ENCODE measurements at regions of chr1 and their contacts with region 1.

Region 1: DNA sequence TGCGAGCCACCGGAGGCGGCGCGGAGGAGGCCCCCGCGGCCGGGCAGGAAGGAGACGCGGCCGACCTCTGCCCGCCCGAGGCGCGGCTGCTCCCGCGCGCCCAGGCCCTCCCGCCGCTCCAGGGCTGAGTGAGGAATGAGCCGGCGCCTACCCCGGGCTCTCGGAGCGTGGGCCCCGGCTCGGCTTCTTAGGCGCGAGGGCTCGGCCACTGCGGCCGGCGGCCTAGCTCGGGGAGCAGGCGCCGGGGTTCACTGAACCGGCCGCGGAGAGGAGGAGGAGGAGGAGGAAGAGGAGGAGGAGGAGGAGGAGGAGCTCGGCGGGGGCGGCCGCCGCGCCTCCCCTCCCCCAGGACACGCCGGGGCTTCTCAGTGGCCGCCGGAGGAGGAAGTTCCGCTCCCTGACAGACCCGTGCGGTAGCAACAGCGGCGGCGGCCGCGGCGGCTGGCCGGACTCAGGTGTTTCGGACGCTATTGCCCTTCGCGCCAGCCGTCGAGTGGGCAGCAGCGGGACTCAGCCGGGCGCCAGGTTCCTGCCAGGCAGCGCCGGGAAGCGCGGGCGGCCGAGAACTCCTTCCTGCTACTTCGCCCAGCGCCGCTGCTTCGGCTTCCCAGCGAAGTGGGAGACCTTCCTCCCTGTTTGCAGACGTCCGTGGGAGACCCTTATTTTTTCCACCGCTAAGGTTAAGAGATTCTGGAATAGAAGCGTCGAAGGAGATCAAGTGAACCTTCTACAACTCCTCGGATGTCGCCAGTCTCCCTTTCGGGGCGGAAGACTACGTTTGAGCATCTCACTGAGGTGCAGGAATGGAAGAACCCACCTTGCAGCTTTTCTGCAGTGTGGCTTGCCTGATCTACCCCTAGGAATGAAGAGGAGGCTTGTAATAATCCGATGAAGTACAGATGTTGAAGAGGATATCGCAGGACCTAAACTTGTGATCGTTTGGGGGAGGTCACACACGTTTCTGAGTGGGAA is at the start of gene MAN1A2:
- DNase-seq: peak; percentile 31 to 87 (median 71)
- ATAC-seq: peak; percentile 61
- H3K4me3 ChIP-seq: peak within 1 kb of the TSS; percentile 57 to 84
- H3K4me3 Mint-ChIP-seq: peak within 1 kb of the TSS; percentile 95
- H3K27ac ChIP-seq: peak within 1 kb of the TSS; percentile 63 to 91
- H3K27ac Mint-ChIP-seq: peak within 1 kb of the TSS; percentile 97
- H3K4me1 ChIP-seq: peaks cover 52% of the 10 kb centered on the region
- H3K4me1 Mint-ChIP-seq: peaks cover 76% of the 10 kb centered on the region
- H3K27me3 ChIP-seq: no peaks in the 10 kb centered on the region
- H3K27me3 Mint-ChIP-seq: no peaks in the 10 kb centered on the region
- CTCF ChIP-seq: no peak
- total RNA-seq, gene MAN1A2: 46.5 to 49.3 TPM

Region 2: DNA sequence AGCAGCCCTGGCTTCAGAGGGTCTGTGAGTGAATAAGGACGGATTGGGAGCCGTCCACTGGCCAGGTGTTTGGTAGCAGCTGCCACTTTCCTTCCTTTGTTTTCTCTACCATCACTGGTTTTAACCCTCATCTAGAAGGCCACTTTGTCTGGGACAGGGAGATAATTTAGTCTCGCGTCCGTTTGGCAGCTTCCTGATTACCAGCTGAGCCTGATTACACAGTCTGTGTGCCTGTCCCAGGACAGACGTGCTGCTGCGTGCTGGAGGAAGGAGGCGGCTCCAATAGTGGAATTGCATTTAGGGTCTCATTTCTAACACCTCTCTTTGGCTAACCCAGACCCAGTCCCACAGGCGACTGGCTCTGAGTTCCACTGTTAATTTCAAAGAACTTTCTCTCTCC is 1574.2 kb before region 1 on chr1:
- CTCF ChIA-PET with region 1: no interaction called
- POLR2A ChIA-PET with region 1: no interaction called
- intact Hi-C with region 1: no loop called
- DNase-seq: no peak
- ATAC-seq: no peak
- H3K4me3 ChIP-seq: no peak overlapping the region
- H3K4me3 Mint-ChIP-seq: no peak overlapping the region
- H3K27ac ChIP-seq: no peak overlapping the region
- H3K27ac Mint-ChIP-seq: no peak overlapping the region
- H3K4me1 ChIP-seq: no peaks in the 10 kb centered on the region
- H3K4me1 Mint-ChIP-seq: no peaks in the 10 kb centered on the region
- H3K27me3 ChIP-seq: no peaks in the 10 kb centered on the region
- H3K27me3 Mint-ChIP-seq: peaks cover 31% of the 10 kb centered on the region
- CTCF ChIP-seq: no peak

Region 3: GRCh38 chr1:116418091-116418830 is 949.1 kb before region 1 on chr1:
- CTCF ChIA-PET with region 1: no interaction called
- POLR2A ChIA-PET with region 1: no interaction called
- intact Hi-C with region 1: loop called in 1 of 2 experiments (anchors 10 kb)
- DNase-seq: peak; percentile 79 to 93 (median 87)
- ATAC-seq: peak; percentile 98
- H3K4me3 ChIP-seq: peak overlapping the region; percentile 81 to 83
- H3K4me3 Mint-ChIP-seq: peak overlapping the region; percentile 89
- H3K27ac ChIP-seq: peak overlapping the region; percentile 78 to 80
- H3K27ac Mint-ChIP-seq: peak overlapping the region; percentile 96
- H3K4me1 ChIP-seq: peaks cover 29% of the 10 kb centered on the region
- H3K4me1 Mint-ChIP-seq: peaks cover 35% of the 10 kb centered on the region
- H3K27me3 ChIP-seq: no peaks in the 10 kb centered on the region
- H3K27me3 Mint-ChIP-seq: no peaks in the 10 kb centered on the region
- CTCF ChIP-seq: no peak

Region 4: GRCh38 chr1:117301901-117302300 is 65.4 kb before region 1 on chr1:
- CTCF ChIA-PET with region 1: no interaction called
- POLR2A ChIA-PET with region 1: no interaction called
- intact Hi-C with region 1: no loop called
- DNase-seq: no peak
- ATAC-seq: no peak
- H3K4me3 ChIP-seq: no peak overlapping the region
- H3K4me3 Mint-ChIP-seq: no peak overlapping the region
- H3K27ac ChIP-seq: no peak overlapping the region
- H3K27ac Mint-ChIP-seq: no peak overlapping the region
- H3K4me1 ChIP-seq: no peaks in the 10 kb centered on the region
- H3K4me1 Mint-ChIP-seq: no peaks in the 10 kb centered on the region
- H3K27me3 ChIP-seq: no peaks in the 10 kb centered on the region
- H3K27me3 Mint-ChIP-seq: no peaks in the 10 kb centered on the region
- CTCF ChIP-seq: no peak

Region 5: GRCh38 chr1:117339866-117340700 is 27.2 kb before region 1 on chr1:
- CTCF ChIA-PET with region 1: interaction called, 3 read pairs
- POLR2A ChIA-PET with region 1: interaction called, 15 read pairs
- intact Hi-C with region 1: no loop called
- DNase-seq: peak in 3 of 9 experiments; percentile 36 to 66 (median 61)
- ATAC-seq: peak; percentile 90
- H3K4me3 ChIP-seq: no peak overlapping the region
- H3K4me3 Mint-ChIP-seq: no peak overlapping the region
- H3K27ac ChIP-seq: no peak overlapping the region
- H3K27ac Mint-ChIP-seq: no peak overlapping the region
- H3K4me1 ChIP-seq: no peaks in the 10 kb centered on the region
- H3K4me1 Mint-ChIP-seq: peaks cover 22% of the 10 kb centered on the region
- H3K27me3 ChIP-seq: no peaks in the 10 kb centered on the region
- H3K27me3 Mint-ChIP-seq: no peaks in the 10 kb centered on the region
- CTCF ChIP-seq: no peak

Region 6: GRCh38 chr1:117416546-117417125 is 49.3 kb after region 1 on chr1:
- CTCF ChIA-PET with region 1: no interaction called
- POLR2A ChIA-PET with region 1: interaction called, 3 read pairs
- intact Hi-C with region 1: loop called in 1 of 2 experiments (anchors 10 kb)
- DNase-seq: no peak
- ATAC-seq: no peak
- H3K4me3 ChIP-seq: no peak overlapping the region
- H3K4me3 Mint-ChIP-seq: no peak overlapping the region
- H3K27ac ChIP-seq: no peak overlapping the region
- H3K27ac Mint-ChIP-seq: peak overlapping the region; percentile 6
- H3K4me1 ChIP-seq: no peaks in the 10 kb centered on the region
- H3K4me1 Mint-ChIP-seq: peaks cover 37% of the 10 kb centered on the region
- H3K27me3 ChIP-seq: no peaks in the 10 kb centered on the region
- H3K27me3 Mint-ChIP-seq: no peaks in the 10 kb centered on the region
- CTCF ChIP-seq: no peak

Region 7: GRCh38 chr1:117501281-117501680 is 133.9 kb after region 1 on chr1:
- CTCF ChIA-PET with region 1: no interaction called
- POLR2A ChIA-PET with region 1: no interaction called
- intact Hi-C with region 1: no loop called
- DNase-seq: no peak
- ATAC-seq: no peak
- H3K4me3 ChIP-seq: no peak overlapping the region
- H3K4me3 Mint-ChIP-seq: no peak overlapping the region
- H3K27ac ChIP-seq: no peak overlapping the region
- H3K27ac Mint-ChIP-seq: no peak overlapping the region
- H3K4me1 ChIP-seq: no peaks in the 10 kb centered on the region
- H3K4me1 Mint-ChIP-seq: no peaks in the 10 kb centered on the region
- H3K27me3 ChIP-seq: no peaks in the 10 kb centered on the region
- H3K27me3 Mint-ChIP-seq: no peaks in the 10 kb centered on the region
- CTCF ChIP-seq: no peak

Region 8: DNA sequence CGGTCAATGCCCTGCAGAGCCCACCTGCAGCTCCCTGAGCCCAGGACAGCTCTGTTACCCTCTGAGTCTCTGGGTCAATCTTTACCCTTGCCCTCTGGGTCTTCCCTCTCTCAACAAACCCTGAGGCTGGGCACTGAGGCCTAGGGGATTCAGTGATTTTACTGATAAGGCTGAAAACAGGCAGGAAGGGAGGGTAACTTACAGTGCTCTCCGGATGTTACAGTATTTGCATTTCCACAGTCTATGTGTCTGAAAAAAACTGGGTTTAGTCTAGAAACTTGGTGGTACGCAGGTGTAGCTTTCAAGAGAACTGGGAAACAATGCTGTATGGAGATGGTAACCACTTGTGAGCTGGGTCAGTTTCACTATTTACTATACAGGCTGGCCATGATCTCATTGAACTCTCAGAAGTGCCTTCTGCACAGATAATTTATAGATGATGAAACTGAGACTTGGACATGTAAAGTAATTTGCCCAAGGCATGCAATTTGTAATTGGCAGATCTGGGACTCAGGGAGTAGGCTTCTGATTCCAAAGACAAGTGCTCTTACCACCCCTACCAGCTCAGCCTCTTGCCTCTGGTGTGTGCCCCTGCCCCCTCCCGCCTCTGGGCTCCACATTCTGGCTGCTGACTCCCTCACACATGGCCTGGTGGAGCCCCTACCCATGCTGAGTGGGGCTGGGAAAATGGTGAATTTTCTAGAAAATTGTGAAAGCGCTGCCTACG is 287.3 kb after region 1 on chr1:
- CTCF ChIA-PET with region 1: no interaction called
- POLR2A ChIA-PET with region 1: no interaction called
- intact Hi-C with region 1: loop called (anchors 5 kb)
- DNase-seq: peak in 2 of 9 experiments; percentile 40 to 64
- ATAC-seq: peak; percentile 7
- H3K4me3 ChIP-seq: no peak overlapping the region
- H3K4me3 Mint-ChIP-seq: peak overlapping the region; percentile 40
- H3K27ac ChIP-seq: peak overlapping the region in 1 of 2 experiments; percentile 70
- H3K27ac Mint-ChIP-seq: peak overlapping the region; percentile 94
- H3K4me1 ChIP-seq: peaks cover 69% of the 10 kb centered on the region
- H3K4me1 Mint-ChIP-seq: peaks cover 83% of the 10 kb centered on the region
- H3K27me3 ChIP-seq: peaks cover 2 to 10% of the 10 kb centered on the region in 2 experiments
- H3K27me3 Mint-ChIP-seq: peaks cover 30% of the 10 kb centered on the region
- CTCF ChIP-seq: no peak